ENCODE measurements at regions of chr22 and their contacts with region 1.

Region 1: GRCh38 chr22:19629720-19630419 is 84.4 kb upstream of the SEPTIN5 start:
- DNase-seq: peak; percentile 90
- ATAC-seq: peak; percentile 93
- H3K4me3 Mint-ChIP-seq: no peak overlapping the region
- H3K27ac Mint-ChIP-seq: no peak overlapping the region
- H3K4me1 Mint-ChIP-seq: no peaks in the 10 kb centered on the region
- H3K27me3 Mint-ChIP-seq: peaks cover 1% of the 10 kb centered on the region

Region 2: DNA sequence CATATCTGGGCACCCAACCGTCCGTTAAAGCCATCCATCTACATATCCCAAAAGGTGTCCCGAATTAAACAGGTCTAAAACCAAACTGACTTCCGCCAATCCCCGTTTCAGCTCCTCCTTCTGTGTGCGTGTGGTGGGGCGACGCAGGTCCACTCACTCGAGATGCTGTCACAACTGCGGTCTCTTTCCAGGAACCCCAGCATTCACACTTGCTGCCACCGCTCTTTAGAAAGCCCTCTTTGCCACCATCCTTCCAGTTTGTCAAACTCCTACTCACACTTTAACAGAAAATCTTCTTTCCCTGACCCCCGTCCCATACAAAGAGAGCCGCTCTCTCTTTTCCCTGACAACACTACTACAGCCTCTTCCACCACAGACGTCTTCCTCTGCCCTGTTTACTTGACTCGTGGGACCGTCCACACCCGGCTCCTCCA is 485.9 kb before region 1 on chr22:
- CTCF ChIA-PET with region 1: interaction called, 10 read pairs
- POLR2A ChIA-PET with region 1: no interaction called
- DNase-seq: peak; percentile 67
- ATAC-seq: peak; percentile 45
- H3K4me3 Mint-ChIP-seq: peak overlapping the region; percentile 99
- H3K27ac Mint-ChIP-seq: peak overlapping the region; percentile 95
- H3K4me1 Mint-ChIP-seq: peaks cover 17% of the 10 kb centered on the region
- H3K27me3 Mint-ChIP-seq: peaks cover 17% of the 10 kb centered on the region

Region 3: GRCh38 chr22:19463496-19464469 is 166.1 kb before region 1 on chr22:
- CTCF ChIA-PET with region 1: interaction called, 12 read pairs
- POLR2A ChIA-PET with region 1: no interaction called
- DNase-seq: no peak
- ATAC-seq: no peak
- H3K4me3 Mint-ChIP-seq: no peak overlapping the region
- H3K27ac Mint-ChIP-seq: no peak overlapping the region
- H3K4me1 Mint-ChIP-seq: peaks cover 12% of the 10 kb centered on the region
- H3K27me3 Mint-ChIP-seq: no peaks in the 10 kb centered on the region

Region 4: DNA sequence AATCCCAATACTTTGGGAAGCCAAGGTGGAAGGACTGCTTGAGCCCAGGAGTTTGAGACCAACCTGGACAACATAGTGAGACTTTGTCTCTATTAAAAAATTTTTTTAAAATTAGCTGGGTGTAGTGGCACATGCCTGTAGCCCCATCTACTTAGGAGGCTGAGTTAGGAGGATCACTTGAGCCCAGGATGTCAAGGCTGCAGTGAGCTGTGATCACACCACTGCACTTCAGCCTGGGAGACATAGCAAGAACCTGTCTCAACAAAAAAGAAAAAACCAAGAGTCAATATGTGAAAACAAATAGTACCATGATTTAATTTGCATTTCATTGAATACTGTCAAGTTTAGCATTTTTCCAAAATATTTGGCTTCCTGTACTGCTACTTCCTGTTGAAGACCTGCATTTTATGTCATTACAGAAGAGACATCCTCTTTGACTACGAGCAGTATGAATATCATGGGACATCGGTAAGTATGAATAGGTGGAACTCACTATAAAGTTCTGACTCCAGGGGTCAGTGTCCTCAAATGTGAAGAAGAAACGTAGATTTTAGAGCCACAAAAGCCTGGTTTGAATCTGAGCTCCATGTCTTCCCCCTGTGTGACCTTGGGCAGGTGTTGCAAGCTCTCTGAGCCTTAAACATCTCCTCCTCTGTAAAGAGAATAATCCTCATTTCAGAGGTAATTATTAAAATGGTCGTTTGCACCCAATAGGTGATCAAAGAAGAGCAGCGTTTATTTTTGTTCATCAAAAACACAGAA is 134.1 kb before region 1 on chr22:
- CTCF ChIA-PET with region 1: interaction called, 18 read pairs
- POLR2A ChIA-PET with region 1: no interaction called
- DNase-seq: no peak
- ATAC-seq: no peak
- H3K4me3 Mint-ChIP-seq: no peak overlapping the region
- H3K27ac Mint-ChIP-seq: no peak overlapping the region
- H3K4me1 Mint-ChIP-seq: peaks cover 7% of the 10 kb centered on the region
- H3K27me3 Mint-ChIP-seq: no peaks in the 10 kb centered on the region

Region 5: GRCh38 chr22:19522190-19522880 is 107.5 kb before region 1 on chr22:
- CTCF ChIA-PET with region 1: interaction called, 10 read pairs
- POLR2A ChIA-PET with region 1: no interaction called
- DNase-seq: no peak
- ATAC-seq: no peak
- H3K4me3 Mint-ChIP-seq: no peak overlapping the region
- H3K27ac Mint-ChIP-seq: no peak overlapping the region
- H3K4me1 Mint-ChIP-seq: peaks cover 16% of the 10 kb centered on the region
- H3K27me3 Mint-ChIP-seq: peaks cover 28% of the 10 kb centered on the region

Region 6: GRCh38 chr22:19598054-19598855 is 31.6 kb before region 1 on chr22:
- CTCF ChIA-PET with region 1: interaction called, 12 read pairs
- POLR2A ChIA-PET with region 1: no interaction called
- DNase-seq: peak; percentile 35
- ATAC-seq: peak; percentile 22
- H3K4me3 Mint-ChIP-seq: peak overlapping the region; percentile 58
- H3K27ac Mint-ChIP-seq: peak overlapping the region; percentile 89
- H3K4me1 Mint-ChIP-seq: peaks cover 38% of the 10 kb centered on the region
- H3K27me3 Mint-ChIP-seq: peaks cover 3% of the 10 kb centered on the region

Region 7: DNA sequence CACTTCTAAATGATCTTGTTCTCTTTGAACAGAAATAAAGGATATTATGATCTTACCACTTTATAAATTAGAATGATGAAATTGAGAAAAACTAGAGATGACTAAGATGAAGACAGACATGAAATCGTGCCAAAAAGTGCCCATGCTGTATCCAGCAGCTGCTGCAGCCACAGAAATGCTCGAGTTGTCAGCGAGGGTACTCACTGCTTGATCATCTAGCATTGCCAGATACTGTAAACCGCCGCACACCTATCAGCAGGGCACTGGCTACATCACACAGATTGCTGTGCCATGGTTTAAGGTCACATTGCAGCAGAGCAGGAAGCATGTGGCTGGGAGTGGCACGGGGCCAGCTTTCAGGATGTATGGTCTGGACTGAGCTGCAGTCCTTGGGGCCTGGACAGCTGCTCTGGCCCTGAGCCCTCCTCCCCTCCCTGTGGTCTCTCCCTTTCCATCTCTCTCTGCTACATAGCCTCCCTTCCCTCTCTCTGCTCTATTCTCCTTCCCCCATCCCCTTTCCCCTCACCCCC is 33.5 kb after region 1 on chr22:
- CTCF ChIA-PET with region 1: no interaction called
- POLR2A ChIA-PET with region 1: no interaction called
- DNase-seq: no peak
- ATAC-seq: no peak
- H3K4me3 Mint-ChIP-seq: no peak overlapping the region
- H3K27ac Mint-ChIP-seq: no peak overlapping the region
- H3K4me1 Mint-ChIP-seq: no peaks in the 10 kb centered on the region
- H3K27me3 Mint-ChIP-seq: no peaks in the 10 kb centered on the region

Region 8: DNA sequence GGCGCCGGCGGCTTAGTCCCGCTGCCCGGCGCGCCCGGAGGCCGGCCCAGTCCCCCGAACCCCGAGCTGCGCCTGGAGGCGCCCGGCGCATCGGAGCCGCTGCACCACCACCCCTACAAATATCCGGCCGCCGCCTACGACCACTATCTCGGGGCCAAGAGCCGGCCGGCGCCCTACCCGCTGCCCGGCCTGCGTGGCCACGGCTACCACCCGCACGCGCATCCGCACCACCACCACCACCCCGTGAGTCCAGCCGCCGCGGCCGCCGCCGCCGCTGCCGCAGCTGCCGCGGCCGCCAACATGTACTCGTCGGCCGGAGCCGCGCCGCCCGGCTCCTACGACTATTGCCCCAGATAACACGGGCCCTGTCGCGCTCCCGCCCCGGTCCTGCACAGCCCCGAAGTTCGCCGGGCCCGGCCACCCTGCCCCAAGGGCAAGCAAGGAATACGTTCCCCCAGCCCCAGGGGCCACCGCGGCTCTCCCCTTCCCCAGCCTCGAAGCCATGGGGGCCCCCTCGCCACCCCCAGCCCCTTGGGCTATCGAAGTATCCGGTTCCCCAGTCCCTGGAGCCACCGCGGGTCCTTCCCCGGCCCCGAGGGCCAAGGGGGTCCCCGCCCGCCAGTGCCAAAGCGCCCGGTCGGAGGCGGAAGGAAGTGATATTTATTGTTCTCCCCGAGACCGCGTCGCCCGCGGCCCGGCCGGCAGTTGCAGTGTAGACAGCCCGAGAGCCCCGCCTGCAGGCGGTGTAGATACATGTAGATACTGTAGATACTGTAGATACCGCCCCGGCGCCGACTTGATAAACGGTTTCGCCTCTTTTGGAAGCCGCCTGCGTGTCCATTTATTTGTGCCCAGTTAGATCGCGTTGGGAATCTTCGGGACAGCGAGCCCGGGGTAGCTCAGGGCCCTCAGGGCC is 136.9 kb after region 1 on chr22:
- CTCF ChIA-PET with region 1: no interaction called
- POLR2A ChIA-PET with region 1: no interaction called
- DNase-seq: peak; percentile 83
- ATAC-seq: peak; percentile 82
- H3K4me3 Mint-ChIP-seq: peak overlapping the region; percentile 63
- H3K27ac Mint-ChIP-seq: no peak overlapping the region
- H3K4me1 Mint-ChIP-seq: peaks cover 20% of the 10 kb centered on the region
- H3K27me3 Mint-ChIP-seq: peaks cover 60% of the 10 kb centered on the region

Measured in activated CD8-positive, alpha-beta T cell treated with anti-CD3 and anti-CD28 coated beads, Interleukin-2, amount 10 ng/mL, durations not matched to agents 7 days and 5 days (primary cell).